Left ventricle myocardium superior (tissue), 1 donor: ENCODE measurements at regions of chr4 and their contacts with region 1.

Region 1: DNA sequence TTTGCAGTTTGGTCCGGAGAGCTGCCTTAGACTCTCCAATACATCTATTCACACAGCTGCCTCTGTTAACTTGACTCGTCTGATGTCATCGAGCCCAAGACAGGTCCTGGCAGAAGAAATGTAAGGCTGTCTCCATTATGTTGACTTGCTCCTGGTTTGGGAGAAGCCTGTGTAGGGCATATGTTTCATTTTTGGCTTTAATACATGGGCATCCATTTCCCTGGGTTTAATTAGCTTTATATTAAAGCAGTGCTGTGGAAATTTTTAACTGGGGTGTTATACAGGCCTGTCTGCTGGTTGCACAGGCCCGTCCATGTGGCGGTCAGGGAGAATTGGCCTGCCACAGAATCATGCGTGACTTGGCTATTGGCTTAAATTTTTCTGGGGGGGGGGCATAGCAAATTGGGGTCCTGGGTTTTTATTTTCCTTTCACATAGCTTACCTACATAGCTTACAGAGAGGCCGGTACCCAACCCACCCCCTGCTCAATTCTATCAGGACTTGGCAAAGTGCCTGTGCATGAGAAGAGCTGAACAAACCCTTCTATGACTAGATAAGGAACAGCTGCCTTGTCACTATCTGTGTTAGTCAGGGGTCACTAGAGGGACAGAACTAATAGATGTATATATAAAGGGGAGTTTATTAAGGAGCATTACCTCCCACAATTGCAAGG is 123.5 kb upstream of the WDR1 start:
- DNase-seq: no peak
- ATAC-seq: no peak

Region 2: DNA sequence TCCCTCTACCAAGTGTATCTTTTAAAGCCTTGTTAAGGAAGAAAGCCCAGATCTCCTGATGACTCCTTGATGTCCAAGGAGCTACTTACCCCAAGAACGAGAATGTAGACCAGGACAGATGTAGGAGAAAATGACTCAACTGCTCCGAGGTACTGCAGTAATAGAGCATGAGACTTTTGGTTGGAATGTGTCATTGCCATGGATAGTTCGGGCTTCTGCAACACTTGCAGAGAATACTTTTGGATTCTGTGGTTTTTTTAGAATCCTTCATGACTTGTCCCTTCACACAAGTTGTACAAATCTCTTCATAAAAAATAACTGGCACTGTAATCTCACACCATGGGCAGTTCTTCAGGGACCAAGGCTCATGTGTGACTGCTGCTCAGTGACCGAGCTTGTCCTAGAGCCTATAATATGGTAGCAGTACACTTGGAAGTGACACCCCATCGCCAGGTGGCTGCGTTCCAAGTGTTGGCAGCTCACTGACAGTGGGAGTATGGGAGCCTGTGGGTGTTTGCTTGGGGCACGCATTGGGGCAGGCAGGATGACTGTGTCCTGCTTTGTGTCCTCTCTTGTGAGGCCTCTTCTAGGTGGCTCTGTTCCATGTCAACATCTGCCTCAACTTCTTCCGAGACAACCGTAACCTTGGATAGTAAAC is 35.6 kb before region 1 on chr4:
- intact Hi-C with region 1: loop called (anchors 2 kb)
- DNase-seq: peak; percentile 65
- ATAC-seq: peak; percentile 82

Region 3: GRCh38 chr4:10296730-10297129 is 56.6 kb after region 1 on chr4:
- intact Hi-C with region 1: no loop called
- DNase-seq: no peak
- ATAC-seq: peak; percentile 86

Region 4: GRCh38 chr4:10384974-10385373 is 144.9 kb after region 1 on chr4:
- intact Hi-C with region 1: no loop called
- DNase-seq: no peak
- ATAC-seq: no peak